H1 (cell line): ENCODE measurements at regions of chr12 and their contacts with region 1.

Region 1: GRCh38 chr12:67019070-67019469 is 250.1 kb upstream of the CAND1 start:
- DNase-seq: no peak
- H3K4me3 ChIP-seq: no peak overlapping the region
- H3K27ac ChIP-seq: no peak overlapping the region
- H3K4me1 ChIP-seq: peaks cover 0 to 9% (median 6%) of the 10 kb centered on the region in 4 experiments; a peak in 4 of 7 replicates
- H3K27me3 ChIP-seq: no peaks in the 10 kb centered on the region
- CTCF ChIP-seq: no peak
- EP300 ChIP-seq: no peak
- POLR2A ChIP-seq: no peak
- RAD21 ChIP-seq: no peak

Region 2: GRCh38 chr12:66952668-66953067 is 66.4 kb before region 1 on chr12:
- CTCF ChIA-PET with region 1: no interaction called
- POLR2A ChIA-PET with region 1: no interaction called
- DNase-seq: no peak
- H3K4me3 ChIP-seq: no peak overlapping the region
- H3K27ac ChIP-seq: no peak overlapping the region
- H3K4me1 ChIP-seq: no peaks in the 10 kb centered on the region
- H3K27me3 ChIP-seq: no peaks in the 10 kb centered on the region
- CTCF ChIP-seq: no peak
- EP300 ChIP-seq: no peak
- POLR2A ChIP-seq: no peak
- RAD21 ChIP-seq: no peak

Region 3: DNA sequence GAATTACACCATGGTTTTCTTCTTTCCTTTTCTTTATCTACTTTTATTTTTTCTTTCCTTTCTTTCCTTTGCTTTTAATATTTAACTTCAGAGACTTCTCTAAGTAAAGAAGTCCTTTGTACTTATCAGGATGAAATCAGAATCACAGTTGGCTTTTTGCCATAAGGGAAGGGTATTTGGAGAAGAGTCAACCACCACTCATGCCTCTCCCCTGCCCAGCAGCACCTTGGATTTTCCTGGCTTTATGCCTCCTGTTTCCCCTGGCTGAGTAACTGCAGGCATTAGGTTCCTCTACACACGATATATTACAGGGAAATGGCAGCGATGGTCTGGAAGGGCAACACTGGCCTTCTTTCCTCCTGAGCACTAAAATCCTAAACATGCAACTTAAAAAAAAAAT is 16.4 kb before region 1 on chr12:
- CTCF ChIA-PET with region 1: interaction called, 23 read pairs
- POLR2A ChIA-PET with region 1: no interaction called
- DNase-seq: no peak
- H3K4me3 ChIP-seq: no peak overlapping the region
- H3K27ac ChIP-seq: no peak overlapping the region
- H3K4me1 ChIP-seq: no peaks in the 10 kb centered on the region
- H3K27me3 ChIP-seq: no peaks in the 10 kb centered on the region
- CTCF ChIP-seq: no peak
- EP300 ChIP-seq: no peak
- POLR2A ChIP-seq: no peak
- RAD21 ChIP-seq: no peak

Region 4: DNA sequence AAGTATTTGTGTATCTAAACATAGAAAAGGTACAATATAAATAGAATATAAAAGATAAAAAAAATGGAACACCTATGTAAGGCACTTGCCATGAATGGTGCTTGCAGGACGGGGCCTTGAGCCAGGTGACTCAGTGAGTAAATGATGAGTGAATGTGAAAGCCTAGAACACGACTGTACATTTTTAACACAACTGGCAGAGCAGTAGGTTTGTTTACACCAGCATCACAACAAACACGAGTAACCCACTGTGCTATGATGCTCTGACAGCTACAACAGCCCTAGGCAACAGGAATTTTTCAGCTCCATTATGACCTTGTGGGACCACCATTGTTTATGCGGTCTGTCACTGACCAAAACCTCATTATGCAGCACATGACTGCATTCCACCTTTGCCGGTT is 15.4 kb after region 1 on chr12:
- CTCF ChIA-PET with region 1: interaction called, 15 read pairs
- POLR2A ChIA-PET with region 1: interaction called, 3 read pairs
- DNase-seq: no peak
- H3K4me3 ChIP-seq: no peak overlapping the region
- H3K27ac ChIP-seq: no peak overlapping the region
- H3K4me1 ChIP-seq: peaks cover 0 to 4% (median 4%) of the 10 kb centered on the region in 4 experiments; a peak in 2 of 7 replicates
- H3K27me3 ChIP-seq: peaks cover 0 to 2% (median 0%) of the 10 kb centered on the region in 4 experiments; a peak in 3 of 7 replicates
- CTCF ChIP-seq: no peak
- EP300 ChIP-seq: no peak
- POLR2A ChIP-seq: no peak
- RAD21 ChIP-seq: no peak

Region 5: GRCh38 chr12:67042697-67043131 is 23.6 kb after region 1 on chr12:
- CTCF ChIA-PET with region 1: interaction called, 16 read pairs
- POLR2A ChIA-PET with region 1: no interaction called
- DNase-seq: no peak
- H3K4me3 ChIP-seq: no peak overlapping the region
- H3K27ac ChIP-seq: no peak overlapping the region
- H3K4me1 ChIP-seq: peaks cover 0 to 15% (median 6%) of the 10 kb centered on the region in 4 experiments; a peak in 6 of 7 replicates
- H3K27me3 ChIP-seq: no peaks in the 10 kb centered on the region
- CTCF ChIP-seq: no peak
- EP300 ChIP-seq: no peak
- POLR2A ChIP-seq: no peak
- RAD21 ChIP-seq: no peak

Region 6: DNA sequence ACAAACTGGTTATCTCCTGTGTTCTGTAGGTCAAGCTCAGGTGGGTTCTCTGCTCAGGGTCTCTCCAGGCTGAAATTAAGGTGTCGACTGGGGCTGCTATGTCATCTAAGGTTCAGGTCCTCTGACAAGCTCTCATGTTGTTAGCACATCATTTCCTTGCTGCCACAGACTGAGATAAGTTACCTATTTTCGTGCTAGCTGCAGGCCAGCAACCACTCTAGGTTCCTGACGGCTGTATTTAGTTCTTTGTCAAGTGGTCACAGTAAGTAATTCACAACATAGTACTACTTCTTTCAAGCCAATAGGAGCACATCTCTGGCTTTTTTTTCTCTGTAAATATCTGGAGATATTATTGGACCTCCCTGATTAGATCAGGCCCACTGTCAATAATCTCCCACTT is 80.8 kb after region 1 on chr12:
- CTCF ChIA-PET with region 1: no interaction called
- POLR2A ChIA-PET with region 1: no interaction called
- DNase-seq: no peak
- H3K4me3 ChIP-seq: no peak overlapping the region
- H3K27ac ChIP-seq: no peak overlapping the region
- H3K4me1 ChIP-seq: no peaks in the 10 kb centered on the region
- H3K27me3 ChIP-seq: no peaks in the 10 kb centered on the region
- CTCF ChIP-seq: no peak
- EP300 ChIP-seq: no peak
- POLR2A ChIP-seq: no peak
- RAD21 ChIP-seq: no peak

Region 7: DNA sequence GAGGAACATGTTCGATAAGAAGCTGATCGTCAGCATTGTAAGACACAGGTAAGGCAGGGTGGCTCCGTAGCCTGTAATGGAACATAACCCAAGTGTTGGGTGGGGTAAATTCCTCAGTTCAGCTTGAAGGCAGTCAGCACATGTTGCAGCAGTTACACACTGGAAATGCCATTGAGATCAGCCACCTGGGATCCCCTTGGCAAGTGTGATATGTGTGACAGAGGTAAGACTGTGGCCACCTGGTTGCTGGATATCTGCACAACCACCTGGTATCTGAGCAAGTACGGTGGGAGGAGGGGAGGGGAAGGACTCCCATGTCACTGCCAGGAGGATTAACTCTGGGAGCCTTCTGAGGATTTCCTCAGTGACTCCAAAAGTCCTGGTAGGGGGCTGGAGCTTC is 92.1 kb after region 1 on chr12:
- CTCF ChIA-PET with region 1: no interaction called
- POLR2A ChIA-PET with region 1: no interaction called
- DNase-seq: no peak
- H3K4me3 ChIP-seq: no peak overlapping the region
- H3K27ac ChIP-seq: no peak overlapping the region
- H3K4me1 ChIP-seq: no peaks in the 10 kb centered on the region
- H3K27me3 ChIP-seq: no peaks in the 10 kb centered on the region
- CTCF ChIP-seq: no peak
- EP300 ChIP-seq: no peak
- POLR2A ChIP-seq: no peak
- RAD21 ChIP-seq: no peak